Posterior cingulate gyrus (tissue), 11 donors: ENCODE measurements at regions of chr18 and their contacts with region 1.

Region 1: DNA sequence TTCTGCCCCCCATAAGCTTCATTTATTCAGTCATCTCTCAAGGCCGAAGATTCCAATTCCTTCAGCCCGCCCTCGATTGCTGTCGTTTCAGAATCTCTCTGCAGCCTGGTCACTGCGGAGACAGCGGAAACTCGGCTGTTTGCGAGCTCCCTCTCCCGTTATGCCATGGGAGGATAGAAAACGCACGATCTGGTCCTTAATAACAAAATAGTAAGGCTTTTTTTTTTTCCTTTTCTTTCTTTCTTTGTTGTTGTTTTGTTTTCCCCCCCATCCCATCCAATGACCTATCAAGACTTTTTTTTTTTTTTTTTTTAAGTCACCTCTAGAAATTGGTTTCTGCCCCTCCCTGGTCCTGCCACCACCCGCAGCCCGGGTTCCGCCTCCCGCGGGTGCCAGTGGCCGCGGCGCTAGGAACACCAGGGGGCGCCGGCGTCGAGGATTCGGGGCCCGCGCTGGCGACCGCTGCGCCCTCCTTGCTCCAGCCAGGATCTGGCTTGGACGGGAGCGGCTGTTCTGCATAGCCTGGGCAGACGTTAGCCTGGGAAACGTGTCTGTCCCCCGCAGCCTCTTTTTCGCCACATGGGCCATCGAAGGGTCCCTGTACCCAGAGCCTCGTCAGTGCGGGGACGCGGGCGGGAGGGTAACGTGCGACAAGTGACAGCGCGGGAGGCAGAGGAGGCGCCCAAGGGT is 10.1 kb downstream of the CPLX4 start:
- DNase-seq: peak; percentile 20 to 94 (median 68)

Region 2: DNA sequence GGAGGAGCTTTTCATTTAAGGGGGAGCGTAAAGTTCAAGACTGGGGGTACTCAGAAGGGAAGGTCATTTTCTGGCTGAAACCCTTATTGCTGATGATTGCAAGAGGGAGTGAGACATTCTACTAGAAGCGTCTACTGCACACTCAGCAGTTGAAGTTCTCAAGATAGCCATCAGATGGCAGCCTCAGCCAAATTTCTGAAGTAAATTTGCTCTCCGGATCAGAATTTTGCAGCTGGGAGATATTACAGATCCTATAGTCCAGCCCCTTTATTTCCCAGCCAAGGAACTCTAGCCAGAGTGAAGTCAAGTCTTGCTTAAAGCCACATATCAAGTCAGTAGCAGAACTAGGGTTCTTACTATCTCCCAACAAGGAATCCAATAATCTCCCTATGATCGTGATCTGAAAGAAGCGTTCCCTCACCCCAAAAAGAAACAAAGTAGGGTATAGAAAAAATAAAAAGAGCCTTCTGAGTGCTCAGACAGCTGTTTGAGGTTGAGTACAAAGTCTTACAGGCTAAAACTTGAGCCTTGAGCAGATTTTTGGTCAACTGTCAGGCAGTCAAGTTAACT is 59.1 kb before region 1 on chr18:
- intact Hi-C with region 1: loop called (anchors 2 kb)
- DNase-seq: peak in 3 of 10 donors; percentile 50 to 67 (median 53)